ENCODE measurements at regions of chr9 and their contacts with region 1.

Region 1: GRCh38 chr9:125143375-125144090 is at the start of gene SCAI:
- DNase-seq: peak; percentile 99 to 100 (median 99)
- ATAC-seq: peak; percentile 100
- H3K4me3 ChIP-seq: peak within 1 kb of the TSS; percentile 61 to 91 (median 72)
- H3K27ac ChIP-seq: peak within 1 kb of the TSS in 9 of 12 donors; percentile 8 to 83 (median 52)
- H3K4me1 ChIP-seq: peaks cover 0 to 15% (median 7%) of the 10 kb centered on the region in 12 donors
- H3K27me3 ChIP-seq: no peaks in the 10 kb centered on the region
- CTCF ChIP-seq: peak; percentile 96 to 100 (median 99)
- POLR2A ChIP-seq: peak in 1 of 2 donors; percentile 59
- total RNA-seq, gene SCAI: 1.8 to 5.3 (median 4.0) TPM

Region 2: DNA sequence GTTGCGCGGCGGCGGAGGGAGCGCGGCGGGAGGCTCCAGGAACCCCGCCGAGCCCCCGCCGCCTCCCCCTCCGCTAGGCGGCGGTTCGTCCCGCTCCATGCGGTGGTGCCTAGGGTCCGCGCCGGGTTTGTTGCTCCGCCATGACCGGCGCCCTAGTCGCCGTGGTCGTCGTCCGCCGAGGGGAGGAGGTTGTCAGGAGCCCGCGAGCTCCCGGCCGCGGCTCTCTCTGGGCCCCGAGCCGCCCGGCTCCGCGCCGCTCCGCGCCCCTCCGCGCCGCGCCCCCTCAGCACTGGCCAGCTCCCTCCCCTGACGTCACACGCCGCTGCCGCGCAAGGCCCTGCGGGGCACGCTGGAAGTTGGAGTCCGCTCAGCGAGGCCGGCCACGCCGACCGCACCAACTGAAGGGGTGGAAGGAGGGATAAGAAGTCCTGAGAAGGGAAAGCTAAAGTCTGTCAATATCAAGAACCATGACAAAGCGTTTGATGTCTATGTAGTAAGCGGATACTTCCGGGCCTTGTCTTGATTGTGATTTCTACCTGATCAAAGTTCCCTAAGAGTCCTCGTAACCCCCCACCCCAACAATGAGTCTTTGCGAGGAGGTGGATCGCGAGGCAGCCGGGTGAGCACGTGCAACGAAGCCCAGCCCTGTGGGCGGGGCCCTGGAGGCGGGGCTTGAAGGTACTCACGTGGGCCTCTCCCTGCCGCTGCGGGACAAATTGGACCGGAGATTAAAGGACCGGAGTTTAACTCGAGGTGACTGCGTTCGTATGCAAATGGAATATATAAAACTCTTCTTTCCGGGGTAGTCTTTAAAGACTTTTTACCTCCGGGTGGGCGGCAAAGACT is 372.3 kb before region 1 on chr9 and contains the start of gene NR6A1:
- intact Hi-C with region 1: loop called in 7 of 10 experiments (anchors 1 to 10 kb)
- DNase-seq: peak; percentile 95 to 98 (median 97)
- ATAC-seq: peak; percentile 94 to 97 (median 95)
- H3K4me3 ChIP-seq: peak within 1 kb of the TSS; percentile 68 to 96 (median 90)
- H3K27ac ChIP-seq: peak within 1 kb of the TSS in 11 of 12 donors; percentile 50 to 82 (median 70)
- H3K4me1 ChIP-seq: peaks cover 0 to 52% (median 18%) of the 10 kb centered on the region in 12 donors
- H3K27me3 ChIP-seq: peaks cover 0 to 30% (median 10%) of the 10 kb centered on the region in 9 donors
- CTCF ChIP-seq: peak in 11 of 12 donors; percentile 9 to 63 (median 35)
- POLR2A ChIP-seq: peak; percentile 9 to 41
- total RNA-seq, gene NR6A1: 1.1 to 5.7 (median 1.6) TPM

Region 3: DNA sequence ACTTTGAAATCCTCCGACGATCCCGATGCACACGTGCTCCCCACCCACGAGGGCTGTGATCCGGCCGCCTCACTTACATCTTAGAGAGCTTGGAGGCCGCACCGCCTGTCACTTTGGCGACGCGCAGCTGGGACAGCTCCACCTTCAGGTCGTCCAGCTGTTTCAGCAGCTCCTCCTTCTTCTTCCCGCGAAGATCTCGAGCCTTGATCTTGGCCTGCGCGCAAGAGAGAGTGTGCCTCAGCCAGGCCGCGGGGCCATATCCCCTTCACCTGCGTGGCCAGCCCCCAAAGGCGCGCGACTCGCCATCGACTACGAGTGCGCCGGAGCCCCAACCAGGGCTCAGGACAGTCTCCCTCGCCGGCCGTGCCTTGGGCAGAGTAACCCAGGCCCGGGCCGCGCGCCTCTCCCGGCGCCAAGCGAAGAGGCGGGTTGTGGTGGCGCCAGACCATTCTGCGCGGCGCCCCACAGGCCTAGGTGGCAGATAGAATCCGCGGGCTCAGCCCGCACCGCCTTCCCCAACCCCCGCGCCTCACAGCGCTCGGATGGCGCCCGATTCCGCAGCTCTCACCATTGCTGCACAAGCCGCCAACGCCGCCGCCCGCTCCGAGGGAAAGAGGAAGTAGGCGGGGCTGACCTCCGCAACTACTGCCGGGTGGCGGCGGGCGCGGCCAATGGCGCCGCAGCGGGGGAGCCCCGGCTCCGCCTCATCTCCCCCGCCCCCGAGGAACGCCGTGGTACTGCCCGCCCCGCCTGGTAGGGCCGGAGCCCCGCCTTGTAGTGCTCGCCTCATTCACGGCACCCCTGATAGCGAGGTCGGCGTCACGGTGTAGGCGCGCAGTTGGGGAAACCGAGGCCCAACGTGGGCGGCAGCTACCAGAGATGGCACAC is 281.9 kb before region 1 on chr9 and contains the starts of genes ARPC5L and RPL35:
- intact Hi-C with region 1: loop called in 5 of 10 experiments (anchors 5 to 10 kb)
- DNase-seq: peak; percentile 96 to 98 (median 96)
- ATAC-seq: peak; percentile 95 to 97 (median 96)
- H3K4me3 ChIP-seq: peak within 1 kb of the TSS; percentile 71 to 98 (median 84)
- H3K27ac ChIP-seq: peak within 1 kb of the TSS; percentile 81 to 95 (median 92)
- H3K4me1 ChIP-seq: peaks cover 0 to 42% (median 32%) of the 10 kb centered on the region in 12 donors
- H3K27me3 ChIP-seq: no peaks in the 10 kb centered on the region
- CTCF ChIP-seq: peak in 7 of 12 donors; percentile 10 to 45 (median 23)
- POLR2A ChIP-seq: peak in 1 of 2 donors; percentile 93
- total RNA-seq, gene ARPC5L: 27.0 to 56.7 (median 38.3) TPM
- total RNA-seq, gene RPL35: 600 to 1,072 (median 736) TPM

Region 4: GRCh38 chr9:124940693-124941453 is 202.7 kb before region 1 on chr9 and contains the start of gene GOLGA1:
- intact Hi-C with region 1: loop called (anchors 1 to 10 kb)
- DNase-seq: peak; percentile 95 to 98 (median 97)
- ATAC-seq: peak; percentile 97 to 99 (median 98)
- H3K4me3 ChIP-seq: peak within 1 kb of the TSS; percentile 60 to 99 (median 86)
- H3K27ac ChIP-seq: peak within 1 kb of the TSS; percentile 87 to 99 (median 96)
- H3K4me1 ChIP-seq: peaks cover 0 to 19% (median 15%) of the 10 kb centered on the region in 12 donors
- H3K27me3 ChIP-seq: no peaks in the 10 kb centered on the region
- CTCF ChIP-seq: peak in 1 of 12 donors; percentile 16
- POLR2A ChIP-seq: peak in 1 of 2 donors; percentile 86
- total RNA-seq, gene GOLGA1: 13.9 to 22.9 (median 19.4) TPM

Region 5: GRCh38 chr9:125074976-125075375 is 68.6 kb before region 1 on chr9:
- intact Hi-C with region 1: no loop called
- DNase-seq: no peak
- ATAC-seq: no peak
- H3K4me3 ChIP-seq: no peak overlapping the region
- H3K27ac ChIP-seq: no peak overlapping the region
- H3K4me1 ChIP-seq: no peaks in the 10 kb centered on the region
- H3K27me3 ChIP-seq: no peaks in the 10 kb centered on the region
- CTCF ChIP-seq: no peak
- POLR2A ChIP-seq: no peak

Region 6: DNA sequence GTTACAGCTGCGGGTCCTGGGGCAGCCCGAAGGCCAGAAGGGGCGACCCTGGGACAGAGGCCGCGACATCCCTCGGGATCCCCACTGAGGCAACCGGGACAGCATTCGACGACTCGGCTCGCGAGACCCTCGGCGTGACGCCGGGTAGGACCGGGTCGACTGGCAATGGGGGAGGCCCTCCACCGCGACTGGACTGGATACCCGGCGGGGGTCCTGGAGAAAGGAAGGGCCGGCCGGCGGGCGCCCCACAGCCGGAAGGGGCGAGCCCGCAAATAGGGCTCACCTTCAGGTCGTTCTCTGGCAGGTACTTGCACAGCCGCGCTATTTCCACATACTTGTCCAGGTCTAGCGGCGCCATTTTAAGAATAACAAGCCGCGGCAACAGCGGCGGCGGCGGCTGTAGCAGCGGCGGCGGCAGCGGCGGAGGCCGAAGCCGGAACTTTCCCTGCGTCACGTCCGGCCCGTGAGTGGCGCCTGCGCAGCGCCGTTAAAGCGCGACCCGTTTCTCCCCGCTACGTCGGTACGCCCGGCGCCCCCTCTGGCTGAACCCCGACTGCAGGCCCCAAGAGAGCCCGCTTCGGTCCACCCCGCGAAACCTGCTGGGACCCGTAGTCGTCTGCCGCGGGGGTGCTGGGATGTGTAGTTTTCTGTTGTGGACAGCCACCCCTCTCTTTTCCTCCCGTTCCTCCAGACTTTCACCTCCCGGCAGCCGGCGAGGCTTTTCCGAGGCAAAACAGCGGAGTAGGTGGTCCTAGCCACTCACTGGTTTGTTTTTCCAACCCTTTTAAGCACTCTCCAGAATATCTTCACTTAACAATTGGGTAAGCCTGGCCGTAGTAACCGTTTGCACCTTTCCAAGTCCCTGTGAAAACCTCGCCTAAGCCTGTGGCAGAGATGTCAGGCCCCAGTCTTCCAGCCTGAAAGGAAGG is 46.1 kb after region 1 on chr9 and contains the start of gene PPP6C:
- intact Hi-C with region 1: loop called in 2 of 10 experiments (anchors 2 to 5 kb)
- DNase-seq: peak; percentile 98 to 99 (median 98)
- ATAC-seq: peak; percentile 98 to 99 (median 99)
- H3K4me3 ChIP-seq: peak within 1 kb of the TSS; percentile 60 to 100 (median 99)
- H3K27ac ChIP-seq: peak within 1 kb of the TSS; percentile 71 to 97 (median 93)
- H3K4me1 ChIP-seq: peaks cover 0 to 49% (median 35%) of the 10 kb centered on the region in 12 donors
- H3K27me3 ChIP-seq: no peaks in the 10 kb centered on the region
- CTCF ChIP-seq: peak; percentile 53 to 86 (median 64)
- POLR2A ChIP-seq: peak; percentile 8 to 81
- total RNA-seq, gene PPP6C: 26.6 to 40.7 (median 37.7) TPM